Breast epithelium (tissue), 4 donors: ENCODE measurements at regions of chr3 and their contacts with region 1.

Region 1: DNA sequence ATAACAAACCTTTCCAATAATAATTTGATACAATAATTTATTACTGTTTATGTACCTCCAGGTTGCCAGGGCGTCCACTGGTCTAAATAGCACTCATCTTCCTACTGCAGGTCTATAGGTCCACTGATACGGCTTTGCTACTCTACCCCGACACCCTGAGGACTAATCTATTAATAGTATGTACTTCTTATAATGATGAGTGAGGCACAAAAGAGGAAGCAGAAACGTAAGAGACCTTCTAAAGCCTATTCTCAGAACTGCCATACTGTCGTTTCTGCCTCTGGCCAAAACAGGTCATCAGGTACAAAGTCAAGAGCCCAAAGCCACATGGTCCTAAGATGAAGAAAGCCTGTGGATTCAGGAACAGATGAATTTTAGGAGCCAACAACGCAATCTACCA is 163.2 kb upstream of the GRM7 start:
- DNase-seq: no peak
- H3K4me3 ChIP-seq: no peak overlapping the region
- H3K27ac ChIP-seq: no peak overlapping the region
- H3K4me1 ChIP-seq: no peaks in the 10 kb centered on the region
- H3K27me3 ChIP-seq: peaks cover 0 to 7% of the 10 kb centered on the region in 2 donors
- CTCF ChIP-seq: no peak
- POLR2A ChIP-seq: no peak

Region 2: DNA sequence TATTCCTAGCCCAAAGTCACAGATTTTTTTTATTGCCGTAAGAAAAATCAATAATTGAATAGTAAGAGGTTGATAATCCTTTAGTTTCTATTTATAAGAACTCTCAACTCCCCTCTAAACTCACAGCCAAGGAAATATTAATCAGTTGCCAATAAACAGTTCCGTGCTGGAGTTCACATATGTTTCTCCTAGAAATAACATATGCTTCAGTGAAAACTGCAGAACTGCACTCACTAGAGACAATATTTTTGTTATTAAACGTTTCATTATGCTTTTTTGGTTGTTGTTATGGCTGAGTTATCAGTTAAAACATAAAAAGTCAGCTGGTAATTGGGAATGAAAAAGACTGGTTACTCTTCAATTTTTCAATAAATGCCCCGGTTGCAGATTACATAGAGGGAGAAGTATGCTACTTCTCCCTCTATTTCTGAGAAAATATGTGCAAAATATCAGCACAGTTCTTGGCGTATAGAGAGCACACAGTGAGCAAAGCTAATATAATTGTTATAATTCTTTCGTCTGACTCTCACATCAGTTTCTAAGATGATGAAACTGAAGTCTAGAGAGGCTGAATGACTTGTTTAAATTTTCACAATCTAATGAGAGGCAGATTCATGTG is 618.1 kb before region 1 on chr3:
- intact Hi-C with region 1: no loop called
- DNase-seq: no peak
- H3K4me3 ChIP-seq: no peak overlapping the region
- H3K27ac ChIP-seq: no peak overlapping the region
- H3K4me1 ChIP-seq: no peaks in the 10 kb centered on the region
- H3K27me3 ChIP-seq: no peaks in the 10 kb centered on the region
- CTCF ChIP-seq: no peak
- POLR2A ChIP-seq: no peak

Region 3: GRCh38 chr3:6680119-6680806 is 17.5 kb before region 1 on chr3:
- intact Hi-C with region 1: no loop called
- DNase-seq: no peak
- H3K4me3 ChIP-seq: no peak overlapping the region
- H3K27ac ChIP-seq: no peak overlapping the region
- H3K4me1 ChIP-seq: no peaks in the 10 kb centered on the region
- H3K27me3 ChIP-seq: no peaks in the 10 kb centered on the region
- CTCF ChIP-seq: no peak
- POLR2A ChIP-seq: no peak

Region 4: DNA sequence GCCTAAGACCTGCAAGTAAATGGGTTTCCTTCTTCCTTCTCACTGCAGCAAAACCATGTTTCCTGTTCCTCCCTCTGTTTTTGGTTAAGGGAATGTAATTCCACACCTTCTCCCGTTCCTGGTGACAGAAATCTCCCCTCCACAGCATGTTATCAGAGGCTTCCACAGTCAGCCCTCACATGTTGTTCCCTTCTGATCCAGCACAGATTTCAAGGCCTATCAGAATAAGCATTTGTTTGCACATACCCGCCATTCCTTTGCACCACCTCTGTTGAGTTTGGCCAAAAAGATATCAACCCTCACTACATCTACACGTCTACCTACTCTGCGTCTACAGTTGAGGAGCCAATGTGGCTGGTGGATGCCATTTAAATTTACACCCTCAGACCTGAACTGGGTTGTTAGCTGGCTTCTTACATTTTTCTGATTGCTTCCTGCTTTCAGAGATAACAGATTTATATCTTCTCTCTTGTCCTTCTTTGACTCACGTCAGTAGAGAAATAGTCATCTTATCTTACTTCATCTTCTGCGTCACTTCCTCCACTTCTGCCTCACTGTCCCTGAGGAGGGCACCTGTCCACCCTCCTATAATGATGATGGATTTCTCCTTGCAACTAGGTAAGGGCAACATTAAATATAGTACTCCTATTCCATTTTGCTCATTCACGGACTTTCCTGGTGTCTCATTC is 49.4 kb after region 1 on chr3:
- intact Hi-C with region 1: loop called (anchors 2 kb)
- DNase-seq: no peak
- H3K4me3 ChIP-seq: no peak overlapping the region
- H3K27ac ChIP-seq: no peak overlapping the region
- H3K4me1 ChIP-seq: no peaks in the 10 kb centered on the region
- H3K27me3 ChIP-seq: no peaks in the 10 kb centered on the region
- CTCF ChIP-seq: no peak
- POLR2A ChIP-seq: no peak